HEK293T (cell line): ENCODE measurements at regions of chr11 and their contacts with region 1.

Region 1: GRCh38 chr11:66438504-66439466 is at the start of gene MRPL11:
- DNase-seq: peak; percentile 94

Region 2: DNA sequence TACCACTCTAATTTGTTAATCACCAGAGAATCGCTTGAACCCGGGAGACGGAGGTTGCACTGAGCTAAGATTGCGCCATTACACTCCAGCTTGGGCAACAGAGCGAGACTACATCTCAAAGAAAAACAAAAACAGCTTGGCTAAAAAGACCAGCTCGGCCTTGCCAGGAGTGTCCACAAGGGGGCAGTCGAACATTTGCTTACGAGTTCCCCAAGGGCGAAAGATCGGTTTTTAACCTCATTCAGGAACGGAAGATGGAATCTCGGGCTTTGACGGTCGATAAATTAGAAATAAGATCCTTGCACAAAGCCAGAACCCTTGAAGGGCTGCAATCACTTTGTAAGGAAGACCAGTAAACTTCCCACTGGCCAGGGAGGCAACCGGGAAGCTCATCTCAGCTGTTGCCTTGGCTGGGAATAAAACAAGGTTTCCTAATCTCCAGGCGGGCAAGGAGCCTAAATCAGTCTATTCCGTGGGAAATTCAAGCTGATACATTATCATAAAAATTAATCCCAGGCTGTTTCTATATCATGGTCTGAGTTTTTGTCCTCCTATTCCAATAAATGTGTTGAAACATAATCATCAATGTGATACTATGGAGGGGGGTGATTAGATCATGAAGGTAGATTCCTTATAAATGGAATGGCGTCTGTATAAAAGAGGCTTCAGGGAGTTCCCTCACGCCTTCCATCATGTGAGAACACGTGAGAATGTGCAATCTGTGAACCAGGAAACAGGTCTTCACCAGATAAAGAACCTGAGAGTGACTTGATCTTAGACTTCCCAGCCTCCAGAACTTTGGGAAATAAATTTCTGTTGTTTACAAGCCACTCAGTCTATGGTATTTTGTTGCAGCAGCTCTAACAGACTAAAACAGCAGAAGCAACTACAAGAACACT is 52.4 kb before region 1 on chr11:
- CTCF ChIA-PET with region 1: interaction called, 12 read pairs
- POLR2A ChIA-PET with region 1: interaction called, 3 read pairs
- DNase-seq: peak; percentile 68

Region 3: GRCh38 chr11:66616379-66617154 is 177.8 kb after region 1 on chr11 and contains the start of gene RBM14:
- CTCF ChIA-PET with region 1: no interaction called
- POLR2A ChIA-PET with region 1: no interaction called
- DNase-seq: peak; percentile 98